Posterior vena cava (tissue), 2 donors: ENCODE measurements at regions of chr9 and their contacts with region 1.

Region 1: DNA sequence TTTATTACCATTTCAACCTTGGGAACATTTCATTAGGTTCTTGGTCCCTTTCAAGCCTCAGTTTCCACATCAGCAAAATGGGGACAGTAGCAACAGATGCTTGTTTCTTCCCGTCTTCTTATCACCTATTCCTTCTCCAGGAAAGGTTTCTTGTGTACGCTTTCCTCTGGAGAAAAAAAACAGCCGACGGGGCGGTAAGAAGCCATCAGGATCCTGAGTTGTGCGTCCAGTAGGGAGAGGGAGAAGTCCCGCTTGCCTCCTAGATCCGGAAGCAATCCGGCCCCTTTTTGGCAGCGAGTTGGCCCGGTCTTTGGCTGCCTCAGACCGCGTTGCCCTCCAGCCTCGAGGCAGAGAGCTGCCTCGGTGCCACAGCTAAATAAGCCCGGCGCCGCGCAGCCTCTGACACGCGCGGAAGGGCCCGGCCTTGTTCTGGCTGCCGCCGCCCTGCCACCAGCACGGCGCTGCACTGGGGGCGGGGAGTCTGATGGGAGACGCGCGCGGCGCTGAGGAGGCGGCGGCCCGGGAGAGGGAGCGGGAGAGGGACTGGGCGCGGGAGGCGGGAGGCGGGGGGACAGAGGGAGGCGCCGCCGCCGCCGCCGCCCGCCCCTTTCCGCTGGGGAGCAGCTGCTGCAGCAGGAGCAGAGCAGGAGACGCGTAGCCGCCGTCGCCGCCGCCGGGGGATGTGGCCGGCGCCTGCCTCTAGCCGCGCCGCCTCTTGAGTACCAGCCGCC is at the start of gene SLC44A1:
- DNase-seq: peak; percentile 99
- total RNA-seq, gene SLC44A1: 34.1 to 41.6 TPM

Region 2: GRCh38 chr9:105195259-105195658 is 48.9 kb before region 1 on chr9:
- intact Hi-C with region 1: no loop called
- DNase-seq: no peak

Region 3: GRCh38 chr9:105205787-105206495 is 38.2 kb before region 1 on chr9:
- intact Hi-C with region 1: loop called in 1 of 2 experiments (anchors 5 kb)
- DNase-seq: no peak

Region 4: GRCh38 chr9:105291938-105292337 is 47.8 kb after region 1 on chr9:
- intact Hi-C with region 1: loop called in 1 of 2 experiments (anchors 2 kb)
- DNase-seq: no peak